ENCODE measurements at regions of chr1 and their contacts with region 1.

Region 1: DNA sequence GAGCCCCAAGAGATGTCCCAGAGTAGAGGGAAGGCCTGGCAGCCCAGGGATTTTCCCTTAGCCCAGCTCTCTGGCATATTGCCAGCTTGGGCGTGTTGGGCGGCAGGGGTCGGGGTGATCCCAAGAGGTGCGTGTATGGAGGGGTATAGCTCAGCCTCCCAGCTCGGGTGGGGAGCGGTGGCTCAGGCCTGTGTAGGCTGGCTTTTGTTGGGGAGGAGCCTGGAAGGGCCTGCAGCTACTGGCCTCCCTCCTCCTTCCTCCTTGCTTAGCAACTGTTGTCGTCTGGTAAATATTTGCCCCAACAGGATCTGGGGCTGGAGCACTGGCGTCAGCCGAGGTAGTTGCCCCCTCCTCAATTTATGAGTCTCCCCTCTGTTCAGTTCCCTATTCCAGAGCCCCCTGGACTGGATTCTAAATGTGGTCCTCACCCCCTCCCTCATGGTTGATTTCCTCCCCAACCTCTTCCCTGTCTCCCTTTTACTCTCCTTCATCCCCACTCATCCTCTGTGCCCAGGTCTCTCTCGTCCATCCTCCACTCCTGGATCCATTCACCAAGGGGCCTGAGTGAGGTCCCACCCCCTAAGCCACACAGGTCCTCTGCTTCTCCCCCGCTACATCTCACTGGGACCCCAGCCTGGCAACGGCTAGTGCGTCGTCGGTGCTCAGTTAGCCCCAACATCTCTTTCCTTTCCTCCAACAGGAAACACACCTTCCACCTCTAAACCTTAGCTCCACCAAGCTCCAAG is 10.3 kb upstream of the LMNA start:
- DNase-seq: peak in 5 of 9 experiments; percentile 50 to 82 (median 61)
- ATAC-seq: no peak
- H3K4me3 ChIP-seq: no peak overlapping the region
- H3K4me3 Mint-ChIP-seq: peak overlapping the region; percentile 29
- H3K27ac ChIP-seq: no peak overlapping the region
- H3K27ac Mint-ChIP-seq: peak overlapping the region; percentile 52
- H3K4me1 ChIP-seq: peaks cover 28% of the 10 kb centered on the region
- H3K4me1 Mint-ChIP-seq: peaks cover 33% of the 10 kb centered on the region
- H3K27me3 ChIP-seq: no peaks in the 10 kb centered on the region
- H3K27me3 Mint-ChIP-seq: no peaks in the 10 kb centered on the region
- CTCF ChIP-seq: no peak

Region 2: DNA sequence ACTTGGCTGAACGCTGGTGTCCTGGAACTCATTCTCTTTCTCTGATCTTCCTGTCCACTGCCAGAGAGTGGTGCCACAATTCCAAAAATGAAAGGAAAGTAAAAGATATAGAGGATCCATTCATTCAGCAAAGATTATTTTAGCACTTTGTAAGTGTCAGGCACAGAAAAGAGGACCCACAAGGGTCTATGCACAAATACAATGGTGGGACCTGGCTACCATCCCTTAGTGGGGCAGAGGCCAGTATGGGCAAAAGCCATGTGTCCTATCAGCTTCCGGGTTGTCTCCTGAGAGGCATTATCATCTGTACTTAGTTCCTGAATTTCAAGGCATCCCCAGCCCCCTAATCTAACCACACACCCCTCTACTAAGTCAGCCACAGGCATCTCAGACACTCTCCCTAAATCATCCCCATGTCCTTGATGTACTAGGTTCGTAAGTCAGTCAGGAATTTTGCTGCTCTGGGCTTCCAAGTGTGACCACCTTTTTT is 102.5 kb before region 1 on chr1:
- CTCF ChIA-PET with region 1: no interaction called
- POLR2A ChIA-PET with region 1: no interaction called
- intact Hi-C with region 1: no loop called
- DNase-seq: no peak
- ATAC-seq: no peak
- H3K4me3 ChIP-seq: no peak overlapping the region
- H3K4me3 Mint-ChIP-seq: no peak overlapping the region
- H3K27ac ChIP-seq: no peak overlapping the region
- H3K27ac Mint-ChIP-seq: no peak overlapping the region
- H3K4me1 ChIP-seq: peaks cover 15% of the 10 kb centered on the region
- H3K4me1 Mint-ChIP-seq: peaks cover 17% of the 10 kb centered on the region
- H3K27me3 ChIP-seq: no peaks in the 10 kb centered on the region
- H3K27me3 Mint-ChIP-seq: no peaks in the 10 kb centered on the region
- CTCF ChIP-seq: no peak

Region 3: GRCh38 chr1:156050416-156050815 is 53.8 kb before region 1 on chr1:
- CTCF ChIA-PET with region 1: no interaction called
- POLR2A ChIA-PET with region 1: no interaction called
- intact Hi-C with region 1: no loop called
- DNase-seq: no peak
- ATAC-seq: no peak
- H3K4me3 ChIP-seq: no peak overlapping the region
- H3K4me3 Mint-ChIP-seq: no peak overlapping the region
- H3K27ac ChIP-seq: no peak overlapping the region
- H3K27ac Mint-ChIP-seq: no peak overlapping the region
- H3K4me1 ChIP-seq: peaks cover 8% of the 10 kb centered on the region
- H3K4me1 Mint-ChIP-seq: peaks cover 21% of the 10 kb centered on the region
- H3K27me3 ChIP-seq: no peaks in the 10 kb centered on the region
- H3K27me3 Mint-ChIP-seq: no peaks in the 10 kb centered on the region
- CTCF ChIP-seq: no peak

Region 4: DNA sequence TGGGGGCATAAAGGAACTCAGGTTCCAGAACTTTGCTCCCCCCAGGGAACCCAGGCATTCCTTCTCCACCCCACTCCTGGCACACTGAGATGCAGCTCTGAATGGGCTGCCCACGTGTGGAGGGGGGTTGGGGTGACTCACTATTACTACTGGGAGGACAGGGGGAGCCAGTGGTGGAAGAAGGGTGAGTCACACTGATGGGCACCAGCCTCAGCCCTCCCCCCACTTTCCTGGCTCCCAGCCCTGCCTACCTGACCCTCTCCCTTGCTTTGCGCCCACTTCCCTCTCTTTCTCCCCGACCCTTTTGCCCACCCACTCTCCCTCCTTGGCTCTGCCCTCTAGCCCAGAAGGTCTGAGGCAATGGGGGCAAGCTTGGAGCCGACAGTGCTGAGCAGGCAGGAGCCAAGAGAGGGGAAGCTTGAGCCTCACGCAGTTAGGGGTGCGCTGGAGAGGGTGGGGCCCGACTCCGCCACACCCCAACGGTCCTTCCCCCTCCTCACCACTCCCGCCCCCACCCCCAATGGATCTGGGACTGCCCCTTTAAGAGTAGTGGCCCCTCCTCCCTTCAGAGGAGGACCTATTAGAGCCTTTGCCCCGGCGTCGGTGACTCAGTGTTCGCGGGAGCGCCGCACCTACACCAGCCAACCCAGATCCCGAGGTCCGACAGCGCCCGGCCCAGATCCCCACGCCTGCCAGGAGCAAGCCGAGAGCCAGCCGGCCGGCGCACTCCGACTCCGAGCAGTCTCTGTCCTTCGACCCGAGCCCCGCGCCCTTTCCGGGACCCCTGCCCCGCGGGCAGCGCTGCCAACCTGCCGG is 10.1 kb after region 1 on chr1 and contains the start of gene LMNA:
- CTCF ChIA-PET with region 1: interaction called, 1,057 read pairs
- POLR2A ChIA-PET with region 1: interaction called, 10 read pairs
- intact Hi-C with region 1: loop called (anchors 1 kb)
- DNase-seq: peak; percentile 40 to 90 (median 77)
- ATAC-seq: peak; percentile 80
- H3K4me3 ChIP-seq: peak within 1 kb of the TSS; percentile 60 to 83
- H3K4me3 Mint-ChIP-seq: peak within 1 kb of the TSS; percentile 93
- H3K27ac ChIP-seq: peak within 1 kb of the TSS; percentile 7 to 68
- H3K27ac Mint-ChIP-seq: peak within 1 kb of the TSS; percentile 88
- H3K4me1 ChIP-seq: peaks cover 22% of the 10 kb centered on the region
- H3K4me1 Mint-ChIP-seq: peaks cover 26% of the 10 kb centered on the region
- H3K27me3 ChIP-seq: peaks cover 16 to 18% of the 10 kb centered on the region in 2 experiments
- H3K27me3 Mint-ChIP-seq: peaks cover 26% of the 10 kb centered on the region
- CTCF ChIP-seq: no peak
- total RNA-seq, gene LMNA: 281 to 298 TPM